HEK293T (cell line): ENCODE measurements at regions of chr4 and their contacts with region 1.

Region 1: GRCh38 chr4:20251796-20252655 is at the start of gene SLIT2:
- DNase-seq: peak; percentile 89

Region 2: DNA sequence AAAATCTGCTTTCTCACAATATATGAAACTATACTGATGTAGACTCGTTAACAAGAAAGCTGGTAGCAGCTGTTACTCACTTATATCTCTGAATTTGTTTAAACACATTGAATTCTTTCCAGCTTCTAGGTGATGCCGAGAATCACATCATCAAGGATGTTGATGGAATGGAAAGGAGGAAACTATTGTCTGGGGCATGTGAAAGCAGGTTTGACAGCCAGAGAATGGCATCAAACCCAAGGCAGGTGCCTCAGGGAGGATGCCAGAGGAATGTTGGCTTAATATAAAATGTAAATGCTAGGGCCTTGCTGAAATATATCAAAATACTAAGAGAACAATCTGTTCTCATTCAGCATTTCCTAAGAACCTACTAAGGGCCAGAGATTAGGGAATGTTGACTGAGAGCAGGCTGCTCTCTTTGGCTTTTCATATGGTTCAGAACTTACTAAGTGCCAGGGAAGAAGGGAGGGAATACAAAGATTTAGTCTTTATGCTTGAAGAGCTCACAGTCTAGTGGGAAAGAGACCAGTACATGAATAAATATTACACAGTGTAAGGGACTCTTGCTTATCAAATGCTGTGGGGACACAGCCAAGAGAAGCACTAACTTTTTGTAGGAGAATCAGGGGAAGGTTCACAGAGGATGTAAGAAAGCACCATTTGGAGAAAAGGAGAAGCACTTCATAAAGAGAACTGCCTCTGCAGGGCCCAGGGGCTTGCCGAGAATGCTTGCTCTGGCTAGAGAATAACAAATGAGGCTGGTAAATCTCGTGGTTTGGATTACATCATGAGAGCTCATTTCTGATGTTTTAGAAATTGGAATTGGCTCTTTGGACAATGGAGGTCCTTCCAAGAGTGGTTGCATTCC is 14.4 kb after region 1 on chr4:
- CTCF ChIA-PET with region 1: no interaction called
- POLR2A ChIA-PET with region 1: interaction called, 25 read pairs
- DNase-seq: no peak

Region 3: DNA sequence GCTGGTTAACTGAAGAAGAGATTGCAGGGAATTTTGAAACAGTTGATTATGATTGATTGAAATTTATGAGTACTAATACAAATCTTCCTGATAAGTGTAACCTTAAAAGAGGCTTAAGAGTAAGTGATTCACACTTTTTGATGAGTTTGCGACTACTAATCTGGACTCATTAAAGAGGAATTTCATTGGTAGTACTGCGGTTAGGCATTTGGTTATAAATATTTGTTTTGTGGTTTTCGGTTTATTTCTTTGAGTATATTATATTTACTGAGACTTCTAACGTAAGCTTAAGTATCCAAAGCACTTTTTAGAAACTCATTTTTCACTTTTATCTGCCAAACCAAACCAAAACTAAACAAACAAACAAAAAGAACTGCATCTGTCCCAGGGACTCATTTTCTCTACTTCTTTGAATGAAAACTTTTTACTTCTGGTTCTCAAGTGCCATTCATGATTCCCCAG is 20.4 kb after region 1 on chr4:
- CTCF ChIA-PET with region 1: no interaction called
- POLR2A ChIA-PET with region 1: interaction called, 25 read pairs
- DNase-seq: no peak